ENCODE measurements at regions of chr9 and their contacts with region 1.

Region 1: DNA sequence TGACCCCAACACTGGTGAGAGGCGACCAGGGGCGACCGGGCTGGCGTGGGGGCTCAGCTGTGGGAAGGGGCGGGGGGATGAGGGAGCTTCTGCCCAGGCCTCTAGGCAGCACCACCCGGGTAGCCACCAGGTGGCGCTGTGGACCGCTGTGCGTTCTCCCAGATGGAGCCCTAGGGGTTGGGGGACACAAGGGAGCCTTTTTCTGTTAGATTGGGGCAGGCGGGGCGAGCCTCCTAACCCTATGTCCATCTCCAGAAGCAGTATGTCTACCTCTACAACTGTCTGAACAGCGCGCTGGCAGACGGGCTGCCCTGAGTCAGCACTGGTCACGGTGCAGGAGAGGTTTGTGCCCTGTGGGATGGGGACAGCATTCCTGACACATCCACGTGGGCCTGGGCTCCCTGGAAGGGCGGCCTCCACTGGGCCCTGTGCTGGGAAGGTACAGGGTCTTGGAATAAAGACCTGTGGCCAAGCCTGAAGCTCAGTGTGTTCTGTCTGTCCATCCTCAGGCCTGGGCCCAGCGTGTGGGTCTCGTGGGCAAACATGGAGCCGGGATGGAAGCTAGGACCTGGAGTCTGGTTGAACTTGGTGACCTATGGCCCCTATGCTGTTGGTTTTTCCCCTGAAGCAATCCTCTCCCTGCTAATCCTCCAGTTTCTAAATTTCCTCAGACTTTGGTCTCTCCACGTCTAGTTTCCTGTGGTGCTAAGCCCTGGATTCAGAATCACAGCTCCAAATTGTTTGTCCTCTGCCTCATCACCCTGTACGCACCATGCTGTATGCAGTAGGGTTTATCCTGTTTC is 23.1 kb upstream of the SPTLC1 start:
- DNase-seq: peak; percentile 34 to 80 (median 66)
- ATAC-seq: peak; percentile 66 to 70
- H3K4me3 Mint-ChIP-seq: peak overlapping the region in 1 of 10 donors; percentile 32
- H3K27ac Mint-ChIP-seq: no peak overlapping the region
- H3K4me1 Mint-ChIP-seq: peaks cover 12 to 25% (median 17%) of the 10 kb centered on the region in 4 donors
- H3K27me3 Mint-ChIP-seq: peaks cover 14 to 59% (median 44%) of the 10 kb centered on the region in 5 donors

Region 2: DNA sequence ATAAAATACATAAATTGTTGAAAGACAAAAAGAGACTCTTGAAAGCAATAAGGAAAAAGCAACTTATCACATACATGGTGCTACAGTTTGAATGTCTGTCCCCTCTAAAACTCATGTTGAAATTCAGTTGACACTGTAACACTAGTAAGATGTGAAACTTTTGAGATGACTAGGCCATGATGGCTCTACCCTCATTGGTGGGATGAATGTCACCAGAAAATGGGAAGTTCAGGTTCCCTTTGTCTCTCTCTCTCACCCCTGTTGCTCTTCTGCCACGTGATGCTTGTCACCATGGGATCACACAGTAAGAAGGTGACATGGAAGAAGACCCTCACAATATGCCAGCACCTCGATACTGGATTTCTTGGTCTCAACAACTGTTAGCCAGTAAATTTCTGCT is 27.1 kb after region 1 on chr9:
- POLR2A ChIA-PET with region 1: no interaction called
- DNase-seq: no peak
- ATAC-seq: no peak
- H3K4me3 Mint-ChIP-seq: no peak overlapping the region
- H3K27ac Mint-ChIP-seq: no peak overlapping the region
- H3K4me1 Mint-ChIP-seq: no peaks in the 10 kb centered on the region
- H3K27me3 Mint-ChIP-seq: peaks cover 0 to 12% (median 4%) of the 10 kb centered on the region in 5 donors

Region 3: DNA sequence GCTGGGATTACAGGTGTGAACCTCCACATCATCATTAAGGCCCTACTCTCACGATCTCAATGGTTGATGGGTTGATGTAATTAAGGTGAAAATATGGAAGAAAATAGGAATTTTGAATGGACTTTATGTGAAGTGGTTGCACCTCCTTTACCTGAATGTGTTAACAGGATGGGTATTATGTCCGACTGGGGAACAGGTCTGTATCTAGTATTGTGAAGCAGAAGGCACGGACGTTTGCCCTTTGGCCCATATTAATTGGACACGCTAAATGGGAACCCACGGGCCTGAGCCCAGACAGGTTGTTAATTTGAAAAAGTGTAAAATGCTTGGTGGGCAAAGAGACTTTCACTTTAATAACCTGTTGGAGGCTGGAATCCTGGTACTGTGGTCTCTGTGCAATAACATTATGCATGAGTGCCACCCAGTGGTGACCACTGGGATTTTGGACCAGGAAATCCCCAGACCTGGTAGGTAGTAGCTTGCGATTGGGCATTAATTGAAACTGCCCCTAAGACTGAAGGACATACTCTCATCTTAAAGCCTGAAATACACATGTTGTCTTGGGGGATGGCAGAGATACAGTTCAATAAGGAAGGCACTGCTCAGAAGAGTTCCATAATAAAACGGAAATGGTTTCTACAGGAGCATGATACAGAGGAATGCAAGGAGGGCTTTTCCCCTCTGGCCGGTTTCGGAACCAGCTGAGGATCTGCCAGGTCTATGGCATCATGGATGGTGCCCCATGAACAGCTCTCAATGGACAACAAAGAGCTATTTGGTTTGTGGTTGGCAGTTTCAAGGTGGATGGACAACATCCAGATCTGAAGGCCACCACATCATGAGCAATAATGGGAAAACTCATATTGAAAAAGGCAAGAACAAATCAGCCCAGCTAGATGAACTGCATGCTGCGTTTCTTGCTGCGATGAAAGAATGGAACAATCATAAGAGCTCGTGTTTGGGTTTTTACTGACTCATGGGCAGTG is 652.5 kb after region 1 on chr9:
- POLR2A ChIA-PET with region 1: interaction called, 11 read pairs
- DNase-seq: peak; percentile 58 to 86 (median 72)
- ATAC-seq: peak; percentile 90 to 99
- H3K4me3 Mint-ChIP-seq: peak overlapping the region in 1 of 10 donors; percentile 11
- H3K27ac Mint-ChIP-seq: peak overlapping the region in 4 of 10 donors; percentile 11 to 79 (median 46)
- H3K4me1 Mint-ChIP-seq: peaks cover 4 to 9% (median 7%) of the 10 kb centered on the region in 4 donors
- H3K27me3 Mint-ChIP-seq: peaks cover 2 to 18% (median 8%) of the 10 kb centered on the region in 5 donors

Measured in naive thymus-derived CD8-positive, alpha-beta T cell (primary cell).